Dorsolateral prefrontal cortex (tissue), 120 donors: ENCODE measurements at regions of chr18 and their contacts with region 1.

Region 1: GRCh38 chr18:38386146-38386545 is 820.5 kb upstream of the CELF4 start:
- DNase-seq: no peak
- H3K4me3 ChIP-seq: no peak overlapping the region
- H3K27ac ChIP-seq: no peak overlapping the region
- H3K27me3 ChIP-seq: peaks cover 0 to 3% (median 0%) of the 10 kb centered on the region in 45 donors
- CTCF ChIP-seq: no peak

Region 2: GRCh38 chr18:38350141-38350540 is 36.0 kb before region 1 on chr18:
- intact Hi-C with region 1: no loop called
- DNase-seq: no peak
- H3K4me3 ChIP-seq: no peak overlapping the region
- H3K27ac ChIP-seq: no peak overlapping the region
- H3K27me3 ChIP-seq: peaks cover 0 to 3% (median 0%) of the 10 kb centered on the region in 45 donors
- CTCF ChIP-seq: no peak

Region 3: DNA sequence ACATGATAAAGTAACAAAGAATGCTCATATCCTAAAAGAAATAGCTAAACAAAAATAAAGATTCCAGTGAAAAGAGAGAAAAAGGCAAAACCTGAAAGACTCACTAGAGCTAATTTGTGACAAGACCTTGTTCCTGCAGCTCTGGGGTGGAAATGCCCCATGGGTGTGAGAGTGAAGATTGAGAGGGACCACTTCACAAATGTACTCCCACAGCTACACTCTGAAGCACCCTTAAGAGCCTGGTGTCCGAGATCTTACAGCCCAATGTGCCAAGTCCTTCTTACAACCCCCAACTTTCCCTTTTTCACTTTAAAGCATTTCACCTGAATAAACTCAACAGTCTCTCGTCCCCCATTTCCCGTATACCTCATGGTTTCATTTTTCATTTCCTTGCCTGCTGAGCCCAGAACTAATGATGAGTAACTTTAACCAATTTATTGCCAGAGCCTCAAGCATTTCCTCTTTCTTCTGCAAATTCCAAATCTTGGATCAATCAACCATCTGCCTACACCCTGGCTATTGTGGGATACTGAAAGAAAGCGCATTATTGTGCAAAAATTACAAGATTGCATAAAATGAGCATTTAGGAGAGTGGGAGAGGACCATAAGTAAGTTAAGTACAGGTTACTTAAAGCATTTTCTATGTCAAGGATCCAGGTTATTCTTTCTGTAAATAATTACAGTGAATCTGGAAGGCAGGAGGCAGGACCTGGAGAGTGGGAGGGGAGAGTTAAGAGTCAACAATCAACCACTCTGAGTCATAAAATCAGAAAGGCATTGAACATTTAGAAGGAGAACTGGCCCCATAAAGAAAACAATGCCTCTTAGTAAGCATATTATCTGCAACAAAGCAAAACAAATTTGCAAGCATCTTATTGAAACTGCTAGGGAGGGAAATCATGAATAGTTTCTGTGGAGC is 16.1 kb before region 1 on chr18:
- intact Hi-C with region 1: loop called in 1 of 2 experiments (anchors 1 kb)
- DNase-seq: no peak
- H3K4me3 ChIP-seq: no peak overlapping the region
- H3K27ac ChIP-seq: no peak overlapping the region
- H3K27me3 ChIP-seq: no peaks in the 10 kb centered on the region
- CTCF ChIP-seq: no peak

Region 4: DNA sequence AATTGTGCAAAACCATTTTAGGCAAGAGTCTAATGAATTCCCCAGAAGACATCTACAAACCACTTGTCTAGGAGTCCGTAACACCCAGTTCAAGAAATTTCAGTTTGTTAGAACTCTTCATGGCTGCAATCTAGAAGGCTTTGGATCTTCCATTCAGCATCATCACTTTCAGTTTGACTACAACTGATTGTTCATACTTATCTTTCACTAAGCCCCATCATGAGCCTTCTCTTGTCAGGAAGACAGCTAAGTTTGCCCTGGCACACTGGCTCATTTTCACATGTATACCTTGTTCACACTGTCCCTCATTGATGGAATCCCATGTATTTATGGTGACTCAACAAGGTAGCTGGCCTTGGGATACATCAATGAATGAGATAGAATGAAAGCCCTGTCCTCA is 77.9 kb after region 1 on chr18:
- intact Hi-C with region 1: no loop called
- DNase-seq: no peak
- H3K4me3 ChIP-seq: no peak overlapping the region
- H3K27ac ChIP-seq: no peak overlapping the region
- H3K27me3 ChIP-seq: no peaks in the 10 kb centered on the region
- CTCF ChIP-seq: no peak

Region 5: DNA sequence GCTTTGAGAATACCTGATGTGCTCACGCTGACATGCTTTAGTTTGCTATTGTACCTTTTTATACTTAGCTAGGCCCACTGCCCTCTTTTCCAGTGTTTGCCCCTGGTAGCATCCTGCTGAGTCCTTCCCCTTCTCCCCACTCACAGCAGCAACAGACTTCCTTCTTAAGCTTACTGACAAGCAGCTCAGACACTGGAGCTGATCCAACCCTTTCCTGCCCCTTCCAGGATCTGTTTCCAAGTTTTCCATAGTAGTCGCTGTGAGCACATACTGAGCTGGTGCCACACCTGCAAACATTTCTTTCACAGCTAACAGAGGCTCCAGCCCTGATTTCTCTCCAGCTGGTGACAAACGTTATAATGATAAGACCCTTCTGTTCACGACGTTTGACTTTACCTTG is 170.9 kb after region 1 on chr18:
- intact Hi-C with region 1: no loop called
- DNase-seq: no peak
- H3K4me3 ChIP-seq: no peak overlapping the region
- H3K27ac ChIP-seq: no peak overlapping the region
- H3K27me3 ChIP-seq: peaks cover 0 to 6% (median 0%) of the 10 kb centered on the region in 45 donors
- CTCF ChIP-seq: no peak